ENCODE measurements at regions of chr4 and their contacts with region 1.

Region 1: GRCh38 chr4:40193016-40193571 is 3.7 kb upstream of the RHOH start:
- DNase-seq: no peak
- H3K4me3 ChIP-seq: no peak overlapping the region
- H3K4me3 Mint-ChIP-seq: no peak overlapping the region
- H3K27ac Mint-ChIP-seq: no peak overlapping the region
- H3K4me1 ChIP-seq: peaks cover 19% of the 10 kb centered on the region
- H3K4me1 Mint-ChIP-seq: peaks cover 20% of the 10 kb centered on the region
- H3K27me3 ChIP-seq: no peaks in the 10 kb centered on the region
- H3K27me3 Mint-ChIP-seq: no peaks in the 10 kb centered on the region
- CTCF ChIP-seq: no peak

Region 2: DNA sequence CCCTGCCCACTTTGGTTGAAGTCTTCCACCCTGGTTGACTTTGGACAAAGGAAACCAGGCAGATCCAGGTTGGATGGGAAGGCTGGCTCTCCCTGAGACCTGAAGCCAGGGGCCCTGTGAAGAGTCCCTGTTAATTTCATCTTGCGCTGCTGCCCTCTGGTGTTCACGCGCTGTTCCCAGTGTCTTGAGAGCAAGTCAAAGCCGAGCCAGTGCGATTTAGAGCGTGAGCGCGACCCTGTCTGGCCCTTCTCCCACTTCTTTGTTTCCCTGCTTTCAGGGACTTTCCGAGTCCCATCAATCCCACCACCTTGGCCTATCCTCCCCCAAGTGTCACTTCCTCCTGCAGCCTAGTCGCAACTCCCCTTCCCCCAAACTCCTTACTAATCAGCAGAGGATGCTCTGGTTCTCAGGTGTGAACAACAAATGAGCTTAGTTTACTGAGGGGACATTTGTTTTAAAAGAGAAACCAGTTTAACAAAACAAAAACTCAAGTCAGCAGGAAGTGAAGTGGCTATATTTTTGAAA is 116.2 kb after region 1 on chr4:
- CTCF ChIA-PET with region 1: no interaction called
- POLR2A ChIA-PET with region 1: no interaction called
- intact Hi-C with region 1: loop called (anchors 5 kb)
- DNase-seq: peak; percentile 84 to 86
- H3K4me3 ChIP-seq: no peak overlapping the region
- H3K4me3 Mint-ChIP-seq: peak overlapping the region; percentile 41
- H3K27ac Mint-ChIP-seq: no peak overlapping the region
- H3K4me1 ChIP-seq: peaks cover 13% of the 10 kb centered on the region
- H3K4me1 Mint-ChIP-seq: peaks cover 18% of the 10 kb centered on the region
- H3K27me3 ChIP-seq: no peaks in the 10 kb centered on the region
- H3K27me3 Mint-ChIP-seq: no peaks in the 10 kb centered on the region
- CTCF ChIP-seq: peak; percentile 78 to 83

Measured in Caco-2 (cell line).